ENCODE measurements at regions of chrX and their contacts with region 1.

Region 1: GRCh38 chrX:53433651-53434639 is at the start of gene HSD17B10:
- DNase-seq: peak; percentile 92 to 96
- H3K4me3 ChIP-seq: peak within 1 kb of the TSS; percentile 52 to 72 (median 62)
- H3K27ac ChIP-seq: peak within 1 kb of the TSS; percentile 33 to 84 (median 74)
- H3K4me1 ChIP-seq: peaks cover 0 to 13% (median 10%) of the 10 kb centered on the region in 4 donors
- H3K27me3 ChIP-seq: peaks cover 0 to 15% (median 0%) of the 10 kb centered on the region in 3 donors
- CTCF ChIP-seq: no peak
- EP300 ChIP-seq: no peak
- POLR2A ChIP-seq: no peak
- total RNA-seq, gene HSD17B10: 16.1 to 36.2 (median 20.9) TPM in 4 of 5 donors, not detected in the other

Region 2: DNA sequence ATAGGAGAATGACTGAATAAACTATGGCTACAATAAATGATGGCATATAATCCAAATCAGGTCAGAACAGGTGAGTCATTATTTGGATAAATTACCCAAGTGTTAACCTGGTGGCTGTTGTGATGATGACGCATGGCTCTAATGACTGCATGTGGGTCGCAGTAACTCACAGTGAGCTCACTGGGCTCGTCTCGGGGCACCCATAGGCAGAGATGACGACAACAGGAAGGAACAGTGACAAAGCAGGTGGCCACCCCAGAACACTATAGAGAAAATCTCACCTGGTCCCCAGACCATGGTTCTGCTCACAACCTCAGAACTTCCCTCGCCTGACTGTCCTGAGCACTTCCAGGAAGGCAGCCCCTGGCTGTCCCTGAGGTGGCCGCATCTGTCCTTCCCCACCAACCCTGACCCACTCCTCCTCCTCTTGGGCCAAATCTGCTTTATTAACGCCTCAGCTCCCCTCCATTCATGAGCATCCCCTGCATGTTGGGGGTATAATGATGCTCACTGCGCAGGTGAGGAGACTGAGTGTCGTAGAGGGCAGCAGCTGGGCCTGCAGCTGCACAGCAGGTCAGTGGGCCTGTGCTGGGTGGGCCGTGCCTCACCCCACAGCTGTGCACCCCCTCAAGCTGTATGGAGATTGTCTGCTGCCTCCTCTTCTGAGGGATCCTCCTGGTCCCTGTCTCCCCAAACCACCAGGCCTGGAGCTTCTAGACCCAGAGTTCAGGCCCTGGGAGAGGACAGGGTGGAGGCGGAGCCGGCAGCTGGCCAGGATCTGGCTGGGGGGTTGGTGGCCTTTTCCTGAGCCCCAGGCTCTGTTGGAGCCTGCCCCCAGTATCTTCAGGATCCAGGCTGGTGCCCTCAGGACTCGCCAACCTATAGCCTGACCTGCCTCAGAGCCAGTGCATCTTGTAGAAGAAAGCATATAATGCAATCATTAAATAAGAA is 444.7 kb before region 1 on chrX:
- intact Hi-C with region 1: no loop called
- DNase-seq: no peak
- H3K4me3 ChIP-seq: no peak overlapping the region
- H3K27ac ChIP-seq: peak overlapping the region in 2 of 5 donors; percentile 8 to 12
- H3K4me1 ChIP-seq: peaks cover 0 to 16% (median 9%) of the 10 kb centered on the region in 4 donors
- H3K27me3 ChIP-seq: no peaks in the 10 kb centered on the region
- CTCF ChIP-seq: no peak
- EP300 ChIP-seq: no peak
- POLR2A ChIP-seq: no peak

Region 3: DNA sequence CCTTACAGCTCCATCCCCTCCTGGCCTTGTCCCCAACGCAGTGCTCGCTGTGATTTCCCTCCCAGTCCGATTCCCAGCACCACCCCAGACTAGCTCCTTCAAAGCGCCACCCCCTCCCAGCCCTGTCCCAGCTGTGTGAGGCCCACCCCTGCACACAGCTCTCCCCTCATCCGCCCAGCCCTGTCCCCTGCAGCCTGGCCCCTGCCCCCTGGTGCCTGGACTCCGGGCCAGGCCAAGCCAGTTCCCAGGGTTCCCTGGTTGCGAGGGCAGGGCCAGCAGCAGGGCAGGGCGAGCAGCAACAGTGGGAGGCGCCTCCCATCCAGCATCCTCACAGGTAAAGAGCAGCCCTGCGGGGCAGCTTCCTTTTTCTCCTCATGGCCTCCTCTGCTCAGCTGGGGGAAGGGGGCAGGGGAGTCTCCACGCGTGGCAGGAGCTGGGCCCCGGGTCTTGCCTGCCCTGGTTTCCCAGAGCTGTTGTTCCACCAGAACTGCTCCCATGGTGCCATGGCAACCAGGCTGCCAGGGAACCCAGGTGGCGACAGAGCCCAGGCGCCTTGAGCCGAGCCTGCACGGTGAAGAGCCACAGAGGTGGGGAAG is 177.4 kb before region 1 on chrX:
- intact Hi-C with region 1: no loop called
- DNase-seq: peak in 1 of 2 donors; percentile 28
- H3K4me3 ChIP-seq: no peak overlapping the region
- H3K27ac ChIP-seq: no peak overlapping the region
- H3K4me1 ChIP-seq: no peaks in the 10 kb centered on the region
- H3K27me3 ChIP-seq: peaks cover 0 to 17% (median 0%) of the 10 kb centered on the region in 3 donors
- CTCF ChIP-seq: no peak
- EP300 ChIP-seq: no peak
- POLR2A ChIP-seq: no peak

Region 4: GRCh38 chrX:53317365-53318069 is 116.4 kb before region 1 on chrX:
- intact Hi-C with region 1: loop called (anchors 10 kb)
- DNase-seq: peak; percentile 76 to 88
- H3K4me3 ChIP-seq: no peak overlapping the region
- H3K27ac ChIP-seq: no peak overlapping the region
- H3K4me1 ChIP-seq: peaks cover 6 to 48% (median 35%) of the 10 kb centered on the region in 4 donors
- H3K27me3 ChIP-seq: peaks cover 6 to 48% (median 24%) of the 10 kb centered on the region in 3 donors
- CTCF ChIP-seq: peak in 5 of 7 experiments; percentile 40 to 86 (median 67)
- EP300 ChIP-seq: no peak
- POLR2A ChIP-seq: no peak